ENCODE measurements at regions of chr11 and their contacts with region 1.

Region 1: DNA sequence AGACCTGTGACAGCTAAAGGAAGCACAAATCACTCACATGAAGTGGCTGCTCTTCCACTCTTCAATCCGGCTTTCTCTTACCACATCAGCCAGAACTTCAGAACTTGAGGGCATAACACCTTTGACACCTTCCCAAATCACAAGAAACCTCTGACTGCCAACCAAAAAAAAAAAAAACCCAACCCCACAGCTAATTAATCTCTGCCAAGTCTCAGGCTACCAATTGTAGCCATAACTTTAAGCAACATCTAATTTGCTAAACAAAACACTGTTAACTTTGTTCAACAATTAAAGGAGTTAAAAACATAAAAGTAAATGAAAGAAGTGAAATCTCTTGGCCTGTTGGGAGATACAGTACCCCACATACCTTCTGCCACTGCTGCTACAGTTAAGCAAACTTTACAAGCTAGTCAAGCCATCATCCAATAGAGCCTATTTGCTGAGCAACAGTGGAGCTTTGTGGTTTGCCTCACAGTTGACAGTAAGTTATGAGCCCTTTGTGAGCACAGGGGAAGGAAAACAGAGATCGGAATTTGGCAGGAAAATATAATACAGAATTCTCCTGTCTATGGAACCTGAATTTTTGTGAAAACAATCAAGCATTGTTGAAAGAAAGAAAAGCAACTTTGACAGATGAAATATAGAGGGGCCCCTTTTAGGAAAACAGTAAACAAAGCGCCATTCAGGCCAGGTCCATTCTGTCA is at the start of gene SOX6:
- DNase-seq: peak in 2 of 4 experiments; percentile 29 to 70
- ATAC-seq: peak; percentile 76
- H3K4me3 ChIP-seq: no peak within 1 kb of the TSS
- H3K27ac ChIP-seq: peak within 1 kb of the TSS; percentile 53
- H3K4me1 ChIP-seq: peaks cover 4 to 55% of the 10 kb centered on the region in 2 experiments; a peak in 4 of 5 replicates
- H3K27me3 ChIP-seq: no peaks in the 10 kb centered on the region
- CTCF ChIP-seq: peak in 1 of 3 experiments; percentile 29; a peak in 3 of 6 replicates
- EP300 ChIP-seq: no peak
- POLR2A ChIP-seq: no peak
- RAD21 ChIP-seq: peak in 1 of 2 experiments; percentile 57; a peak in 3 of 4 replicates
- polyA plus RNA-seq, gene SOX6: 0.89 to 2.9 TPM

Region 2: GRCh38 chr11:15969281-15969680 is 386.9 kb before region 1 on chr11:
- CTCF ChIA-PET with region 1: no interaction called
- POLR2A ChIA-PET with region 1: no interaction called
- in situ Hi-C with region 1: no loop called
- intact Hi-C with region 1: loop called (anchors 10 kb)
- DNase-seq: peak; percentile 57 to 92 (median 72)
- ATAC-seq: peak; percentile 91
- H3K4me3 ChIP-seq: peak overlapping the region; percentile 1; the same call in 1 of the 2 replicates
- H3K27ac ChIP-seq: peak overlapping the region; percentile 93
- H3K4me1 ChIP-seq: peaks cover 18 to 39% of the 10 kb centered on the region in 2 experiments
- H3K27me3 ChIP-seq: no peaks in the 10 kb centered on the region
- CTCF ChIP-seq: no peak
- EP300 ChIP-seq: peak; percentile 61; the same call in 1 of the 2 replicates
- POLR2A ChIP-seq: peak; percentile 78
- RAD21 ChIP-seq: no peak

Measured in K562 (cell line).